Activated T-helper 1 cell treated with anti-CD3 and anti-CD28 coated beads, Interleukin-12 subunit alpha, Interleukin-12 subunit beta, Interleukin-2, Interleukin-4 antibody, amounts not matched to agents 30 ng/mL and 10 ng/mL and 1 ng/mL, durations not matched to agents 14 hours and 24 hours and 36 hours (primary cell): ENCODE measurements at regions of chr4 and their contacts with region 1.

Region 1: DNA sequence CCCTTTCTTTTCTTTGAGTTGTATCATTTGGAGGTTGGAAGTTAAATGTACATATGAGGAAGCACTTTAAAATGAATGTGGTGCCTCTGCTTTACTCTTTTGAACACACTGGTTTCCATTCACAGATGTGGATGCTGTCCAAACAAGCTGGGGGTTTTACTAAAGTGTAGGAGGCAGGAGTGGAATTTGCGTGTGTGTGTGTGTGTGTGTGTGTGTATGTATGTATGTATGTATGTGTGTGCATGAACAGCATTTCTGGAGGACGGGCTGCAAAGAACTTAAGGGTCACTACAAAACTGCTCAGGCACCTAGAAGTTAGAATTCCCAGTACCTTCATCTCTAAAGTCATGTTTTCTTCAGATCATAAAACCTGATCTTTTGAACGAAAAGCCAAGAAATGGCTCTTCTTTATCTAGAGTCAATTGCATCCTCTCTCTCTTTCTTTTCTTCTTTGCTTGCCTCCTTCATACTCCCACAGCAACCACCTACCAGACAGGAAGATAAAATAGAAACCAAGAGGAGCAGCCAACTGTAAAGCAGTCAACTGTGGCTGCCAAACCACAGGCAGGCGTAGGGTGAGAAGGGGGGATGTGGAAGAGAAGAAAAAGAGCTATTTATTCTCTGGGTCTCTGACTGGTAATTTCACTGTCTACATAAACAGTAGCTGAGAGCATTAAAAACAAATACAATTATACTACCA is 177.0 kb upstream of the RASGEF1B start:
- DNase-seq: peak; percentile 37
- H3K4me3 Mint-ChIP-seq: peak overlapping the region; percentile 46
- H3K27ac Mint-ChIP-seq: peak overlapping the region; percentile 81
- H3K4me1 Mint-ChIP-seq: peaks cover 57% of the 10 kb centered on the region
- H3K27me3 Mint-ChIP-seq: no peaks in the 10 kb centered on the region

Region 2: GRCh38 chr4:81494031-81494431 is 154.7 kb before region 1 on chr4:
- intact Hi-C with region 1: loop called (anchors 1 kb)
- DNase-seq: no peak
- H3K4me3 Mint-ChIP-seq: peak overlapping the region; percentile 50
- H3K27ac Mint-ChIP-seq: peak overlapping the region; percentile 25
- H3K4me1 Mint-ChIP-seq: peaks cover 43% of the 10 kb centered on the region
- H3K27me3 Mint-ChIP-seq: peaks cover 10% of the 10 kb centered on the region

Region 3: GRCh38 chr4:81589262-81589661 is 59.5 kb before region 1 on chr4:
- intact Hi-C with region 1: loop called (anchors 1 kb)
- DNase-seq: no peak
- H3K4me3 Mint-ChIP-seq: no peak overlapping the region
- H3K27ac Mint-ChIP-seq: no peak overlapping the region
- H3K4me1 Mint-ChIP-seq: peaks cover 13% of the 10 kb centered on the region
- H3K27me3 Mint-ChIP-seq: no peaks in the 10 kb centered on the region

Region 4: GRCh38 chr4:81666491-81666890 is 17.8 kb after region 1 on chr4:
- intact Hi-C with region 1: loop called (anchors 1 kb)
- DNase-seq: no peak
- H3K4me3 Mint-ChIP-seq: no peak overlapping the region
- H3K27ac Mint-ChIP-seq: no peak overlapping the region
- H3K4me1 Mint-ChIP-seq: peaks cover 10% of the 10 kb centered on the region
- H3K27me3 Mint-ChIP-seq: no peaks in the 10 kb centered on the region

Region 5: GRCh38 chr4:81808011-81808672 is 159.4 kb after region 1 on chr4:
- intact Hi-C with region 1: no loop called
- DNase-seq: no peak
- H3K4me3 Mint-ChIP-seq: no peak overlapping the region
- H3K27ac Mint-ChIP-seq: no peak overlapping the region
- H3K4me1 Mint-ChIP-seq: no peaks in the 10 kb centered on the region
- H3K27me3 Mint-ChIP-seq: no peaks in the 10 kb centered on the region

Region 6: GRCh38 chr4:81827577-81828202 is 179.0 kb after region 1 on chr4:
- intact Hi-C with region 1: loop called (anchors 5 kb)
- DNase-seq: no peak
- H3K4me3 Mint-ChIP-seq: no peak overlapping the region
- H3K27ac Mint-ChIP-seq: peak overlapping the region; percentile 11
- H3K4me1 Mint-ChIP-seq: peaks cover 13% of the 10 kb centered on the region
- H3K27me3 Mint-ChIP-seq: peaks cover 2% of the 10 kb centered on the region

Region 7: GRCh38 chr4:82352913-82353366 is 704.2 kb after region 1 on chr4:
- intact Hi-C with region 1: loop called (anchors 5 kb)
- DNase-seq: no peak
- H3K4me3 Mint-ChIP-seq: no peak overlapping the region
- H3K27ac Mint-ChIP-seq: peak overlapping the region; percentile 77
- H3K4me1 Mint-ChIP-seq: peaks cover 42% of the 10 kb centered on the region
- H3K27me3 Mint-ChIP-seq: no peaks in the 10 kb centered on the region